ENCODE measurements at regions of chr7 and their contacts with region 1.

Region 1: GRCh38 chr7:108114117-108114841 is 15.9 kb downstream of the LAMB4 start:
- DNase-seq: no peak
- H3K4me3 ChIP-seq: no peak overlapping the region; a peak in 1 of 4 replicates
- H3K27ac ChIP-seq: no peak overlapping the region
- H3K4me1 ChIP-seq: peaks cover 0 to under 1% of the 10 kb centered on the region in 2 experiments; a peak in 1 of 4 replicates
- H3K27me3 ChIP-seq: no peaks in the 10 kb centered on the region
- CTCF ChIP-seq: peak; percentile 57
- EP300 ChIP-seq: no peak
- RAD21 ChIP-seq: peak; percentile 56

Region 2: GRCh38 chr7:108083980-108084379 is 30.3 kb before region 1 on chr7:
- CTCF ChIA-PET with region 1: no interaction called
- POLR2A ChIA-PET with region 1: no interaction called
- DNase-seq: no peak
- H3K4me3 ChIP-seq: no peak overlapping the region
- H3K27ac ChIP-seq: no peak overlapping the region
- H3K4me1 ChIP-seq: peaks cover 4 to 32% of the 10 kb centered on the region in 2 experiments
- H3K27me3 ChIP-seq: no peaks in the 10 kb centered on the region
- CTCF ChIP-seq: no peak
- EP300 ChIP-seq: peak in 1 of 2 experiments; percentile 35; a peak in 1 of 4 replicates
- RAD21 ChIP-seq: no peak

Region 3: GRCh38 chr7:108094933-108095710 is 19.2 kb before region 1 on chr7:
- CTCF ChIA-PET with region 1: interaction called, 16 read pairs
- POLR2A ChIA-PET with region 1: interaction called, 3 read pairs
- DNase-seq: peak; percentile 31
- H3K4me3 ChIP-seq: no peak overlapping the region; a peak in 1 of 4 replicates
- H3K27ac ChIP-seq: peak overlapping the region; percentile 81 to 85
- H3K4me1 ChIP-seq: peaks cover 13 to 25% of the 10 kb centered on the region in 2 experiments
- H3K27me3 ChIP-seq: no peaks in the 10 kb centered on the region
- CTCF ChIP-seq: no peak
- EP300 ChIP-seq: peak in 1 of 2 experiments; percentile 66; a peak in 1 of 4 replicates
- RAD21 ChIP-seq: no peak